ENCODE measurements at regions of chr6 and their contacts with region 1.

Region 1: DNA sequence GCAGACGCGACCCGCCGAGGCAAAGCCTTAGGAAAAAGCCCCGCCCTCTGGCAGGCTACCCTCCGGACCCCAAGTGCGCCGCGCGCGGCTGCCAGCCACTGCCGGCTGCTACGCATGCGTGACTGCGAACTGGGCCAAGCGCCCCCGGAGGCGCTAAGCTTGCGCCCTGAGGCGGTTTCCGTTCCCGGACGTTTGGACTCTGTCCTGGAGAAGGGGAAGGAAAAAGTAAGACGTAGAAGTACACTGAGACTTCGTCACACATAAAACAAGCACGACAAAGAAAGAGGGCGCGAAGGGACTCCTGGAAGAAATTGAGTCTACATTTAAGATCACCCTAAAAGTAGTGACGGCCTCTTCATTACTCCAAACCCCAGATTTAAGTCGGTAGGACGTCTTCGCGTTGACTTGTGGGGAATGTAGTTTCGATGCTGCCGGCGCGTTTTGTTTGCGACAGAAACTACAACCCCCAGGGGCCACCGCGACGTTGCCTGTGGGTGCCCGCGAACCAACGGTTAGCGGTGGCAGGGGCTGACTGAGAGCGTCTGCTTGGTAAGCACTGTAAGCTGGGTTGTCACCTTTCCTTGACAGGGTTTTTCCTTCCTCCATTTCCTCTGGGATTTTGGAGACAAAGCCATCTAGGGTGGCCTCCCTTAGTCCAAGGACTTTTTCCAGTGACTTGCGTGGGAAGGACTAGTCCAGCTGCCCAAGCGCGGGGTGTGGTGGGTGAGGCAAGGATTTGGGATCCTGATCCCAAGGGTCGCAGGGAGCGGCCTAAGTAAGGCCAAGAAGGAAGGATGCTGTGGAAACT is at the start of gene CEP57L1:
- DNase-seq: peak; percentile 97 to 99
- ATAC-seq: peak; percentile 73 to 86 (median 83)
- H3K4me3 ChIP-seq: peak within 1 kb of the TSS; percentile 77
- H3K27ac ChIP-seq: peak within 1 kb of the TSS; percentile 98
- H3K4me1 ChIP-seq: peaks cover 30% of the 10 kb centered on the region
- H3K27me3 ChIP-seq: no peaks in the 10 kb centered on the region
- CTCF ChIP-seq: peak; percentile 3
- total RNA-seq, gene CEP57L1: 6.4 to 8.6 (median 6.5) TPM

Region 2: DNA sequence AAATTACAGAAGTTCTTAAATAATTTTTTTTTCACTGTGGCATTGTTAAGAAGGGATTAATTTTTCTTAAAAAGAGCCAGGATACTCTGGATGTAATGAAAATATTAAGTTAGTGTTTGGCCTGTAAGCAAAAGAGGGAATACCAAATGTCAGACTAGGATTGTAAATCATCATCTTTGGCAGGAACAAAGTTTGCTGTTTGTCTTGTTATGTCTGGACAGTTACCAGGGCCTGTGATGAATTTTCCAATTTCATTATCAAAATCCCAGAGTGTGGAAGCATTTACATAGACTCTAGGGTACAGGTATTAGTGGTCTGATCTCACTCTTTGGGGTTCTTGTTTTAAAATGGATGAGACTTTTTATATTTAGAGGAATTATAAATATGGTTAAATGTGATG is 26.2 kb after region 1 on chr6:
- intact Hi-C with region 1: no loop called
- DNase-seq: no peak
- ATAC-seq: peak in 1 of 4 donors; percentile 59
- H3K4me3 ChIP-seq: no peak overlapping the region
- H3K27ac ChIP-seq: peak overlapping the region; percentile 3
- H3K4me1 ChIP-seq: peaks cover 35% of the 10 kb centered on the region
- H3K27me3 ChIP-seq: no peaks in the 10 kb centered on the region
- CTCF ChIP-seq: no peak

Region 3: DNA sequence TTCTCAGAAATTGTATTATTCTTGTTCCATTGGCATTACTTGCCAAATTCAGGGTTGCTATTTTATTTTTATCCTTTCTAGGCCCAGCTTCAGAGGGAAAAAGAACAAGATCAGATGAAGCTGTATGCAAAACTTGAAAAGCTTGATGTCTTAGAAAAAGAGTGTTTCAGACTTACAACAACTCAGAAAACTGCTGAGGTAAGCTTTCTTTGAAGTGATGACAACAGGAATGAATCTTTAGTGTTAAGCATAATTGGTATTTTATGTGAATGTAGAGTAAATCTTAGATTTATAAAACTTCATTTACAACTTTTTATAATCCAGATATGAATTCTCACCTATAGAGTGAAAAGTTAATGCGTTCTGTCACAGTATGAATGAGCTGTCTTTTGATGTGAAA is 58.5 kb after region 1 on chr6:
- intact Hi-C with region 1: loop called in 1 of 2 experiments (anchors 5 kb)
- DNase-seq: no peak
- ATAC-seq: no peak
- H3K4me3 ChIP-seq: no peak overlapping the region
- H3K27ac ChIP-seq: no peak overlapping the region
- H3K4me1 ChIP-seq: no peaks in the 10 kb centered on the region
- H3K27me3 ChIP-seq: no peaks in the 10 kb centered on the region
- CTCF ChIP-seq: no peak

Region 4: GRCh38 chr6:109304284-109305015 is 209.2 kb after region 1 on chr6:
- intact Hi-C with region 1: loop called in 1 of 2 experiments (anchors 5 kb)
- DNase-seq: peak in 1 of 2 donors; percentile 72
- ATAC-seq: peak; percentile 20 to 83 (median 78)
- H3K4me3 ChIP-seq: no peak overlapping the region
- H3K27ac ChIP-seq: peak overlapping the region; percentile 73
- H3K4me1 ChIP-seq: peaks cover 33% of the 10 kb centered on the region
- H3K27me3 ChIP-seq: no peaks in the 10 kb centered on the region
- CTCF ChIP-seq: no peak

Region 5: DNA sequence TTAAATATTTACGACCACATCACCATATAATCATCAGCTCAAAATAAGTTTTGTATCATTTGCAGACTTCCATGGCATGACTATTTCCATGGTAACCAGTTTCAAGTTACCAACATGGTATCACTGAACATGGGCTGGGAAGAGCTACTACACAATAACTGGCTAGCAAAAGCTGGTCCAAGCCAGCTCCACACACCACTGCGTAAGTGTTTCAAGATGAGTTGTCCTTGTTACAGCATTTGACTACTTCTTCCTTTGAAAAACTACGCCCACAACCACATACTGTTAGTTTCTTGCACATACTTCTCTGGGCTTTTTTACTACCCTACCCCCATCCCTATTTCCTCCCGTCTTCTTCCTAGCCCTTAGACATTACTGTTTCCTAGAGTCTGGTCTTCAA is 278.5 kb after region 1 on chr6:
- intact Hi-C with region 1: loop called in 1 of 2 experiments (anchors 10 kb)
- DNase-seq: no peak
- ATAC-seq: peak; percentile 90 to 94 (median 92)
- H3K4me3 ChIP-seq: peak overlapping the region; percentile 13
- H3K27ac ChIP-seq: peak overlapping the region; percentile 79
- H3K4me1 ChIP-seq: peaks cover 54% of the 10 kb centered on the region
- H3K27me3 ChIP-seq: no peaks in the 10 kb centered on the region
- CTCF ChIP-seq: no peak